ENCODE measurements at regions of chr4 and their contacts with region 1.

Region 1: DNA sequence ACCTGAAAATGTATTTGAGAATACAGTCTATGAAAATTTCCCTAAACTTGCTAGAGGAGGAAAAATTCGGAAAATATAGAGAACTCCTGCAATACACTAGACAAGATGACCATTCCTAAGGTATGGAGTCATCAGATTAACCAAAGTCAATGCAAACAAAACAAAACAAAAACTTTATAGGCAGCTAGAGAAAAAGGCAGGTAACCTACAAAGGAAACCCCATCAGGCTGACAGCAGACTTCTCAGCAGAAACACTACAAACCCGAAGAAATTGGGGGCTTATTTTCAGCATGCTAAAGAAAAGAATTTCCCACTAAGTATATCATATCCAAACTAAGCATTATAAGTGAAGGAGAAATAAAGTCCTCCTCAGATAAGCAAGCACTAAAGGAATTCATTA is 1136.4 kb downstream of the PCDH7 start:
- DNase-seq: no peak
- H3K4me3 Mint-ChIP-seq: no peak overlapping the region
- H3K27ac Mint-ChIP-seq: no peak overlapping the region
- H3K4me1 Mint-ChIP-seq: no peaks in the 10 kb centered on the region
- H3K27me3 Mint-ChIP-seq: no peaks in the 10 kb centered on the region
- CTCF ChIP-seq: no peak

Region 2: GRCh38 chr4:31788676-31789075 is 67.9 kb before region 1 on chr4:
- CTCF ChIA-PET with region 1: interaction called, 12 read pairs
- intact Hi-C with region 1: no loop called
- DNase-seq: no peak
- H3K4me3 Mint-ChIP-seq: no peak overlapping the region
- H3K27ac Mint-ChIP-seq: no peak overlapping the region
- H3K4me1 Mint-ChIP-seq: no peaks in the 10 kb centered on the region
- H3K27me3 Mint-ChIP-seq: no peaks in the 10 kb centered on the region
- CTCF ChIP-seq: no peak

Measured in Calu3 (cell line).